Heart right ventricle (tissue), 16 donors: ENCODE measurements at regions of chr6 and their contacts with region 1.

Region 1: GRCh38 chr6:128882991-128883611 is at the start of gene LAMA2:
- DNase-seq: peak; percentile 88 to 90
- ATAC-seq: peak; percentile 97 to 99 (median 98)
- H3K4me3 ChIP-seq: peak within 1 kb of the TSS; percentile 53 to 77 (median 70)
- H3K27ac ChIP-seq: peak within 1 kb of the TSS; percentile 81 to 92 (median 88)
- H3K4me1 ChIP-seq: peaks cover 0 to 21% (median 15%) of the 10 kb centered on the region in 9 donors
- H3K27me3 ChIP-seq: peaks cover 0 to 5% (median 0%) of the 10 kb centered on the region in 7 donors
- CTCF ChIP-seq: peak in 7 of 9 donors; percentile 24 to 61 (median 35)
- total RNA-seq, gene LAMA2: 144 to 293 (median 251) TPM

Region 2: GRCh38 chr6:128807577-128807976 is 75.5 kb before region 1 on chr6:
- intact Hi-C with region 1: loop called in 3 of 10 experiments (anchors 5 kb)
- DNase-seq: no peak
- ATAC-seq: peak in 2 of 8 donors; percentile 12 to 31
- H3K4me3 ChIP-seq: no peak overlapping the region
- H3K27ac ChIP-seq: peak overlapping the region in 1 of 10 donors; percentile 26
- H3K4me1 ChIP-seq: peaks cover 0 to 21% (median 5%) of the 10 kb centered on the region in 9 donors
- H3K27me3 ChIP-seq: no peaks in the 10 kb centered on the region
- CTCF ChIP-seq: peak; percentile 20 to 62 (median 52)

Region 3: GRCh38 chr6:128848212-128848935 is 34.7 kb before region 1 on chr6:
- intact Hi-C with region 1: loop called in 1 of 10 experiments (anchors 1 kb)
- DNase-seq: peak in 1 of 2 donors; percentile 26
- ATAC-seq: peak; percentile 63 to 98 (median 94)
- H3K4me3 ChIP-seq: peak overlapping the region in 2 of 10 donors; percentile 9 to 13
- H3K27ac ChIP-seq: peak overlapping the region in 9 of 10 donors; percentile 5 to 78 (median 55)
- H3K4me1 ChIP-seq: peaks cover 0 to 18% (median 0%) of the 10 kb centered on the region in 9 donors
- H3K27me3 ChIP-seq: no peaks in the 10 kb centered on the region
- CTCF ChIP-seq: no peak

Region 4: GRCh38 chr6:129006724-129007514 is 123.8 kb after region 1 on chr6:
- intact Hi-C with region 1: loop called in 1 of 10 experiments (anchors 10 kb)
- DNase-seq: no peak
- ATAC-seq: peak in 5 of 8 donors; percentile 33 to 64 (median 53)
- H3K4me3 ChIP-seq: no peak overlapping the region
- H3K27ac ChIP-seq: peak overlapping the region in 5 of 10 donors; percentile 2 to 35 (median 23)
- H3K4me1 ChIP-seq: peaks cover 7 to 49% (median 39%) of the 10 kb centered on the region in 9 donors
- H3K27me3 ChIP-seq: no peaks in the 10 kb centered on the region
- CTCF ChIP-seq: no peak

Region 5: DNA sequence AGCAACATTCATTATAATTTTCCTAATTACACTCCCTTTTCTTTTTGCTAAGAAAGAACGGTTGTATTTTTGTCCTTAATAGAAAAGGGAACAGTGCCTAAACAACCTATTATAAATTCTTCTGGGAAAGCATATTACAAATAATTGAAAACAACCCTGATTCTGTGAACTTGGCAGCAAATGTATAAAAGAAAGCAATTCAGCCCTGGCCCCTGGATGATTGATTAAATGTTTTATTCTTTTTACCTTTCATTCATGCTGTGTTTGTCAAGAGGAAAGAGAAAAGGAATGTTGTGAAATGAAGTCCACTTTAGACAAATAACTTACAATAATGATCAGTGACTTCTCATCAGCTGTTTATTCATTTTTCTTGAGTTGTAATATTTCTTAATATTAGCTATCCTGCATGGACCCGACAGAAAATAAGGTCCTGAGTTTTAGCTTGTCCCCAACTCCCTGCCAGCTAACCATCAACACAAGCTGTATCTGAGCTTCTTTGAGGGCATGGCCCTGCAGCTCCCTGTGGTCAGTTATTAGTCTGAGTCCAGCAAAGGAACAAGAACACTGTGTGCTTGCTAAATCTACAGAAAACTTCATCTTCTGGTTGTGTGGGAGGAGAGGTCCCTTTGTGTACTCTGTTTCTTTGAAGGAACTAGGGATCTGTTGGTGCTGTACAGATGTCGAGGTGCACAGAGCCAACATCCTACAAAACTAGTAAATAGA is 248.0 kb after region 1 on chr6:
- intact Hi-C with region 1: loop called in 2 of 10 experiments (anchors 10 kb)
- DNase-seq: peak in 1 of 2 donors; percentile 20
- ATAC-seq: peak; percentile 27 to 78 (median 69)
- H3K4me3 ChIP-seq: no peak overlapping the region
- H3K27ac ChIP-seq: peak overlapping the region; percentile 16 to 86 (median 70)
- H3K4me1 ChIP-seq: peaks cover 8 to 68% (median 57%) of the 10 kb centered on the region in 9 donors
- H3K27me3 ChIP-seq: no peaks in the 10 kb centered on the region
- CTCF ChIP-seq: no peak